Activated T-helper 1 cell treated with anti-CD3 and anti-CD28 coated beads, Interleukin-12 subunit alpha, Interleukin-12 subunit beta, Interleukin-2, Interleukin-4 antibody, amounts not matched to agents 30 ng/mL and 10 ng/mL and 1 ng/mL, durations not matched to agents 14 hours and 24 hours and 36 hours (primary cell): ENCODE measurements at regions of chr15 and their contacts with region 1.

Region 1: GRCh38 chr15:92097474-92098178 is 244.1 kb downstream of the SLCO3A1 start:
- DNase-seq: no peak
- H3K4me3 Mint-ChIP-seq: no peak overlapping the region
- H3K27ac Mint-ChIP-seq: no peak overlapping the region
- H3K4me1 Mint-ChIP-seq: peaks cover 61% of the 10 kb centered on the region
- H3K27me3 Mint-ChIP-seq: no peaks in the 10 kb centered on the region

Region 2: DNA sequence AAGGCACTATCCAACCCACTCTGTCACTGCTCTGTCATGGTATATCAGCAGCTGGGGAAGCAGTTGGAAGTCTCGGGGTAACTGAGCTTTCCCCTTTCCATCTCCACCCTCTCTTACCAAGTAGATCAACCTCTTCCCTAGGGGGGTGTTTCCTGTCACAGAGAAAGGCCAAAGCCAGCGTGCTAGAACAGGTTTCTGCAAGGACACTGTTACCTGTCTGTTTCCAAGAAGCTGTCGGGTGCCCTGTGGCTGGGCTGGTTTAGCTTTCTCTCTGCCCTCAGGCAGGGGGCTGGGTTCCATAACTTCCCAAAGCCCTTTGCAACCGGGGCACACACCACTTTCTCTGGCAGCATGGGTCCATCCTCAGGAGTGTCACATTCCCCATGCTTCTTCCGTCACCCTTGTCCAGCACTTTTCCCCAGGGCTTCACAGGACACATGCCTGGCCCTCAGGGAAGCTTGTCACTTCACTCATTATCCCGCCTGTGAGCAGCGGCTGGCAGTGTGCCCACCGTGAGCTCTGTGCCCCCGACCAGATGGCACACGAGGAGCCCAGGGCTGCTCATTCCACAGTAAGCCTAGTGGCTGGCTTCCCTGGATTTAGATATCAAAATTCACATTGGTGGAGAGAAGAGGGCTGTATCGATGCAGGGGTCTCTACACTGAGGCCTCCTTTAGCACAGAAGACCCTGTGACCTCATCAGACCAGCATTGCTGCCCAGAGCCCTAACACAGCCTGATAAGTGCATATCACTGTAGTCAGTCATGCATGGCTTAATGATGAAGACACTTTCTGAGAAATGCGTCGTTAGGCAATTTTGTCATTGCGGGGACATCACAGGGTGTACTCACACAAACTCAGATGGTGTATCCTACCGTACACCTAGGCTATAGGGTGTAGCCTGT is 38.3 kb before region 1 on chr15:
- intact Hi-C with region 1: no loop called
- DNase-seq: no peak
- H3K4me3 Mint-ChIP-seq: no peak overlapping the region
- H3K27ac Mint-ChIP-seq: no peak overlapping the region
- H3K4me1 Mint-ChIP-seq: no peaks in the 10 kb centered on the region
- H3K27me3 Mint-ChIP-seq: no peaks in the 10 kb centered on the region

Region 3: GRCh38 chr15:92226014-92226612 is 128.5 kb after region 1 on chr15:
- intact Hi-C with region 1: loop called (anchors 1 kb)
- DNase-seq: no peak
- H3K4me3 Mint-ChIP-seq: no peak overlapping the region
- H3K27ac Mint-ChIP-seq: no peak overlapping the region
- H3K4me1 Mint-ChIP-seq: no peaks in the 10 kb centered on the region
- H3K27me3 Mint-ChIP-seq: peaks cover 7% of the 10 kb centered on the region

Region 4: GRCh38 chr15:92383519-92384326 is 286.1 kb after region 1 on chr15:
- intact Hi-C with region 1: loop called (anchors 1 kb)
- DNase-seq: no peak
- H3K4me3 Mint-ChIP-seq: no peak overlapping the region
- H3K27ac Mint-ChIP-seq: no peak overlapping the region
- H3K4me1 Mint-ChIP-seq: no peaks in the 10 kb centered on the region
- H3K27me3 Mint-ChIP-seq: peaks cover 42% of the 10 kb centered on the region